HCT116 (cell line): ENCODE measurements at regions of chr10 and their contacts with region 1.

Region 1: DNA sequence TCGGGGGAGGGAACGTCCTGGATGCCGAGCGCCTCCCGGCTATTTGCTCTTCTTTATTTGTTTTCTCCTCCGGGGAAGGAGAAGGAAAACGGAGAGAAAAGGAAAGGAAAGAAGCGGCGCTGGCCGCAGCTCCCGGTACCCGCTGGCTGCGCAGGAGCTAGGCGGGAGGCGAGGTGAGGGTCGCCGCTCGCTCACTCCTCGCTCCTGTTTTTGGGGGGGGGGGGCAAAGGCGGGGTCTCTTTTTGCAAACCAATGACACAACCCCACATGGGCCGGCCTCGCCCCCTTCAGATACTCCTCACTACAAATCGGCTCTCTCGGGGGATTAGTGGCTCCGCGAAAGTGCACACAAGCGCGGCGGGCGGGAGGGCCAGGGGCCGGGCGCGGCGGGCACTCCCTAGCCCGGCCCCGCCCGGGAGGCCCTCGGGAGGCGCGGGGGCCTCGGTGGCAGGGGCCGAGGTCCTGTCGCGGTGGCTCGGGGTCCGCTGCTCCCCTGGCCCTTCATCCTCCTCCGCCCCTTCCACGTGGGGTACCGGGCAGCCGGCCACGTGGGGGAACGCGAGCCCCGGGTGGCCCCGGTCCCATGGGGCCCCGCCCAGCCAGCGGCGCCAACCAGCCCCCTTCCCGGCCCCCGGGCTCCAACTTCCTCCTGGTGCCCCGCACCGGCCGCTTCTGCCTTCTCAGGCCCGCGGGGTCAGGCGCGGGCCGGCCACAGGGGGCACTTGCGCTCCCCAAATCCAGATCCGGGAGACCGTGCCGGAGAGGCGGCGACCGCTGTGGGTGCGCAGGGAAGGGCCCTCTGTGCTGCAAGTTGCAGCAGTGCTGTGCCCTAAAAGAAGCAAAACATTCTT is 718 bp upstream of the CTBP2 start:
- DNase-seq: peak; percentile 82
- ATAC-seq: peak; percentile 79
- H3K4me3 ChIP-seq: peak overlapping the region; percentile 64 to 77
- H3K27ac ChIP-seq: peak overlapping the region; percentile 99
- H3K4me1 ChIP-seq: peaks cover 29 to 42% of the 10 kb centered on the region in 2 experiments
- H3K27me3 ChIP-seq: no peaks in the 10 kb centered on the region
- CTCF ChIP-seq: peak in 2 of 3 experiments; percentile 44 to 47; a peak in 4 of 6 replicates
- POLR2A ChIP-seq: peak; percentile 36
- RAD21 ChIP-seq: no peak

Region 2: DNA sequence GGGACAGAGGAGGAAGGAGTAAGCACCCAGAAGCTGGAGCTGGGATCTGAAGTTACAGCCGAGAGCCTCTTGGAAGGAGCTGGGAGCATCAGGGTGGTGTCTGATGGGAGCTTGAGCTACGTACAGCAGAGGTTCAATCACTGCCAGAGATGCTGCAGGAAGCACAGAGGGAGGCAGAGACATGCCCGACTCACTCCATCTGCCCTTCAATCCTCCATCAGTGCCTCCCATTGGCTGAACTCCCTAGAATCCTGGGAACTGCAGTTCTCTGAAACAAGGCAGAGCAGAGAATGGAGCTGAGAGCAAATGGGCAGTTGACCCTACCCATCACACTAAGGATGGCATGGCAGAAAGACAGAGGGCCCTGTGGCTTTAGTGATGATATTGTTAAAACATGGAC is 39.3 kb after region 1 on chr10:
- CTCF ChIA-PET with region 1: no interaction called
- POLR2A ChIA-PET with region 1: no interaction called
- RAD21 ChIA-PET with region 1: interaction called in 1 of 2 experiments, 11 read pairs
- intact Hi-C with region 1: no loop called
- DNase-seq: no peak
- ATAC-seq: peak; percentile 24; the same call in 1 of the 2 replicates
- H3K4me3 ChIP-seq: no peak overlapping the region
- H3K27ac ChIP-seq: no peak overlapping the region
- H3K4me1 ChIP-seq: peaks cover 12 to 21% of the 10 kb centered on the region in 2 experiments
- H3K27me3 ChIP-seq: no peaks in the 10 kb centered on the region
- CTCF ChIP-seq: no peak
- POLR2A ChIP-seq: no peak
- RAD21 ChIP-seq: no peak